SK-N-SH (cell line): ENCODE measurements at regions of chr17 and their contacts with region 1.

Region 1: DNA sequence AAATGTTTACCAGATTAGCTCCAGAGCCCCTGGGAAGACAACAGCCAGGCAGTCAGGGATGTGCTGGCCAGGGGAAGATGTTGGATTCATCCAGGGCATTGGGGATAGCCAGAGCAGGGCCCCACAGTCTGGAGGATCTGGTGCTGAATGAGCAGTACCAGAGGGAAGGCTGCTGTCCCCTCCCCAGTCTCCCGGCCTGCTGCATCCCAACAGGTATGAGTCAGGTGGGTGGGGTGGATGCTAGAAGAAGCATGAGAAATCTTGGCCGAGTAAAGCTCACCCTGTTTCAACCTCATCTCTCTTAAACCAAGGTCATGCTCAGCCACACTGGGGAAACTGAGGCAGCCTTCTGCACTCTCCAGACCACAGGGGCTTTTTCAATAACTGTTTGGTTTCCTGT is 71.9 kb upstream of the SEC14L1 start:
- DNase-seq: no peak
- H3K4me3 ChIP-seq: no peak overlapping the region
- H3K27ac ChIP-seq: no peak overlapping the region
- H3K4me1 ChIP-seq: no peaks in the 10 kb centered on the region; a peak in 1 of 4 replicates
- H3K27me3 ChIP-seq: peaks cover 22% of the 10 kb centered on the region; the same call in 1 of the 2 replicates
- CTCF ChIP-seq: no peak
- EP300 ChIP-seq: no peak
- RAD21 ChIP-seq: no peak

Region 2: DNA sequence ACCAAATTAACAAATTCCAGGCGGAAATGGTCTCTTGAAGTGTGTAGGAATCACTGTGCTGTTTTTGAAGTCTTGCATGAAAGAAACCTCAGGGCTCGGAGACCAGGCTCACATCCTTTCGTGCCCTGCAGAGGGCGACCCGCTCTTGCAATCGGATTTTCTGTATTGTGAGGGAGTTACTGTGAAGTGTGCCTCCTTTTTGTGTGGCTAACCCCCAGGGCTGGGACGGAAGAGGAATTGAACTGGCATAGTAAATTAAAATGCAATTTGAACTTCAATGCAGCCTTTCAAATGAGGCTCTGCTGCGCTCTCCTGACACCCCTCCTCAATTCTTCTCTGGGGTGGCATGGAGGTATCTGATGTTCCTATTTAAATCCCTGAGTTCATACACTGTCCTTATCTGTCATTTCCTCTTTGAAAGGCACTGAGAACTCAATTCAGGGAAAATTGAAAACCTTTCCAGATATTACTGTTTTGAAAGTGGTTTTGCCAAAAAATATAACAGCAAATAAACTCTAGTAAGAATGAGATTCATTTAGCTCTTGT is 252.3 kb before region 1 on chr17:
- CTCF ChIA-PET with region 1: interaction called, 32 read pairs
- POLR2A ChIA-PET with region 1: no interaction called
- DNase-seq: peak; percentile 85
- H3K4me3 ChIP-seq: no peak overlapping the region
- H3K27ac ChIP-seq: no peak overlapping the region
- H3K4me1 ChIP-seq: peaks cover 0 to 14% of the 10 kb centered on the region in 2 experiments; a peak in 1 of 4 replicates
- H3K27me3 ChIP-seq: peaks cover 12% of the 10 kb centered on the region; the same call in 1 of the 2 replicates
- CTCF ChIP-seq: peak; percentile 93
- EP300 ChIP-seq: no peak
- RAD21 ChIP-seq: peak; percentile 98

Region 3: GRCh38 chr17:76852843-76853242 is 216.1 kb before region 1 on chr17:
- CTCF ChIA-PET with region 1: interaction called, 14 read pairs
- POLR2A ChIA-PET with region 1: no interaction called
- DNase-seq: no peak
- H3K4me3 ChIP-seq: no peak overlapping the region
- H3K27ac ChIP-seq: no peak overlapping the region
- H3K4me1 ChIP-seq: peaks cover 0 to 5% of the 10 kb centered on the region in 2 experiments; a peak in 1 of 4 replicates
- H3K27me3 ChIP-seq: peaks cover 11% of the 10 kb centered on the region; the same call in 1 of the 2 replicates
- CTCF ChIP-seq: no peak
- EP300 ChIP-seq: no peak
- RAD21 ChIP-seq: no peak

Region 4: DNA sequence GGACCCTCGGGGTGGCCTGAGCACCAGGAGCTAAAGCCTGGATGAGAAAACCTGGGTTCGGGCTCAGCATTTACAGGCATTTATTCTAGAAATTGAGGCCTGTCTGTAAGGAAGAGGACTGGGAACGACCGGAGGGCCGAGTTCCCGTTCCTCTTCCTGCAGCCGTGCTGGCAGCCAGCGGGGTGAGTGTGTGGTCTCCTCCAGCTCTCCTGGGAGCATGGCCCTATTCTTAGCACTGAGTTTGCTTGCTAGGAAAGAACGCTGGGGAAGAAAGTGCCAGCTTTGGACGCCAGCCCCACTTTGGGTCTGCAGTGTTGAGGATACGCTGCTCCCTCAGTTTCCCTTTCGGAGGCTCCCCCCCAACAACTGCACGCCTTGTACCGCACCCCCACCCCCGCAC is 151.1 kb before region 1 on chr17:
- CTCF ChIA-PET with region 1: interaction called, 10 read pairs
- POLR2A ChIA-PET with region 1: no interaction called
- DNase-seq: no peak
- H3K4me3 ChIP-seq: no peak overlapping the region
- H3K27ac ChIP-seq: no peak overlapping the region
- H3K4me1 ChIP-seq: no peaks in the 10 kb centered on the region; a peak in 1 of 4 replicates
- H3K27me3 ChIP-seq: no peaks in the 10 kb centered on the region
- CTCF ChIP-seq: no peak
- EP300 ChIP-seq: no peak
- RAD21 ChIP-seq: no peak

Region 5: GRCh38 chr17:77036807-77037381 is 32.0 kb before region 1 on chr17:
- CTCF ChIA-PET with region 1: interaction called, 37 read pairs
- POLR2A ChIA-PET with region 1: no interaction called
- DNase-seq: peak; percentile 84
- H3K4me3 ChIP-seq: peak overlapping the region in 1 of 2 experiments; percentile 4; a peak in 1 of 4 replicates
- H3K27ac ChIP-seq: peak overlapping the region in 1 of 2 experiments; percentile 17; a peak in 1 of 4 replicates
- H3K4me1 ChIP-seq: peaks cover 0 to 16% of the 10 kb centered on the region in 2 experiments; a peak in 2 of 4 replicates
- H3K27me3 ChIP-seq: peaks cover 42% of the 10 kb centered on the region
- CTCF ChIP-seq: no peak
- EP300 ChIP-seq: peak in 1 of 2 experiments; percentile 32; a peak in 1 of 4 replicates
- RAD21 ChIP-seq: peak; percentile 35

Region 6: GRCh38 chr17:77083531-77083930 is 14.6 kb after region 1 on chr17:
- CTCF ChIA-PET with region 1: interaction called, 41 read pairs
- POLR2A ChIA-PET with region 1: no interaction called
- DNase-seq: no peak
- H3K4me3 ChIP-seq: no peak overlapping the region
- H3K27ac ChIP-seq: no peak overlapping the region; a peak in 1 of 4 replicates
- H3K4me1 ChIP-seq: peaks cover 5 to 16% of the 10 kb centered on the region in 2 experiments; a peak in 1 of 4 replicates
- H3K27me3 ChIP-seq: no peaks in the 10 kb centered on the region
- CTCF ChIP-seq: no peak
- EP300 ChIP-seq: no peak
- RAD21 ChIP-seq: no peak

Region 7: DNA sequence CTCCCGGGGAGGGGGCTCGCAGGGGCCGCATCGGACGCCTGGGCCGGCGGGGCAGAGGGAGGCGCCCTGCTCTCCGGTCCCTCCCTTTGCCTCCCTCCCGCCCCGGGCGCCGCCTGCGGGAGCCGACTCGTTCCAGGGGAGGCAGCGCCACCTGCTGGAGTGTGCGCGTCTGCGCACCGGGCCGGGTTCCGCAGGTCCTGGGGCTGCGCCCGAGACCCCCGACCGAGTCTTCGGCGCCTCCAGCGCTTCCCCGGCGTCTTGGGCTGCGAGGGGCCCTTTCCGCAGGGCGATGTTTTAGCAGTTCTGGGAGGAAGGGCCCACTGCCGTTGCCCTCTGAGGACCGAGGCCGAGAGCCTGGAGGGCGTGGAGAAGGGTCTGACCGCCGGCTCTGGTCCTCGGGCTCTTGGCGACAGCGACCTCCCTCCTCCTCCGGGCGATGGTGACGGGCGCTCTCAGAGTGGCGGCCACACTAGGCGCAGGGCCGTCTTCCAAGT is 178.2 kb after region 1 on chr17:
- CTCF ChIA-PET with region 1: interaction called, 12 read pairs
- POLR2A ChIA-PET with region 1: no interaction called
- DNase-seq: peak; percentile 98
- H3K4me3 ChIP-seq: peak overlapping the region; percentile 47 to 80
- H3K27ac ChIP-seq: no peak overlapping the region; a peak in 1 of 4 replicates
- H3K4me1 ChIP-seq: peaks cover 0 to 6% of the 10 kb centered on the region in 2 experiments; a peak in 1 of 4 replicates
- H3K27me3 ChIP-seq: no peaks in the 10 kb centered on the region
- CTCF ChIP-seq: peak; percentile 98
- EP300 ChIP-seq: no peak
- RAD21 ChIP-seq: peak; percentile 86

Region 8: DNA sequence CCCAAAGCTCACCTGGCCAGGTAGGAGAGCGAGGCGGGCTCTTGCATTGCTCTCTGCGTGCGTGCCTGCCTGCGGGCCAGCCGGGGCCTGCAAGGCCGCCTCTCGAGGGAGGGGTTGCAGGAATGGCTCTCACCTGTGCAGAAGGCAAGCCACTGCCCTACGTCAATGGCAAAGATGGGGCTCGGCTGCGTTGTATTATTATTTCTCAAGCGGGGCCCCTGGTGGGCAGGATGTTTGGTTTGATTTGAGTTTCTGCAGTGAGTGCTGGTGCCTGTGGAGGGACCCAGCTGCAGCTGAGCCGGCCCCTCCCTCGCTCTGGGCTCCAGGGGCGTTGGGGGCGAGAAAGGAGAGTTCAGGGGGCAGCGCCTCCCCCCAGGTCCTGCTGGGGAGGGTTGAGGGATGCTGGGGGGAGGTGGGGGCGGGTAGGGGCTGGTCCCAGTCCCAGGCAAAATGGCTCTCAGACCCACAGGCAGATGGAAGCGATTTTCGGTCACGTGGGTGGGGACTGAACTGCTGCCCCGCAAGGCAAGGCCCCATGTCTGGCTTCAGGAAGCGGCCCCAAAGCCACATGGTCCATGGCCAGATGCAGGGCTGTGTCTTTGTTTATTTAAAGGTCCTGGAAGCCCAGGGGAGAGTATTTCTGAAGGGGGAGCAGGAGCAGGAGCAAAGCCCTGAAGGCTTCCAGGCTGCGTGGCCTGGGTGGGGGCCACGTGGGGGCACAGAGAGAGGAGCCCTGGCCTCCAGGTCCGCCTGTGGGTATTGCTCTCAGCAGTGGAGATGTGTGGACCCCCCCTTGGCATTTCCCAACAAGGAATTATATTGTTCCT is 410.7 kb after region 1 on chr17:
- CTCF ChIA-PET with region 1: no interaction called
- POLR2A ChIA-PET with region 1: no interaction called
- DNase-seq: peak; percentile 95
- H3K4me3 ChIP-seq: no peak overlapping the region
- H3K27ac ChIP-seq: peak overlapping the region in 1 of 2 experiments; percentile 87; a peak in 2 of 4 replicates
- H3K4me1 ChIP-seq: peaks cover 41 to 67% of the 10 kb centered on the region in 2 experiments
- H3K27me3 ChIP-seq: no peaks in the 10 kb centered on the region
- CTCF ChIP-seq: no peak
- EP300 ChIP-seq: peak in 1 of 2 experiments; percentile 71; a peak in 2 of 4 replicates
- RAD21 ChIP-seq: no peak